ENCODE measurements at regions of chr18 and their contacts with region 1.

Region 1: GRCh38 chr18:12236934-12237832 is 17.0 kb upstream of the CIDEA start:
- DNase-seq: peak; percentile 24
- ATAC-seq: peak; percentile 99
- H3K4me3 ChIP-seq: peak overlapping the region in 1 of 3 experiments; percentile 41; a peak in 1 of 6 replicates
- H3K27ac ChIP-seq: no peak overlapping the region
- H3K4me1 ChIP-seq: peaks cover 12% of the 10 kb centered on the region; the same call in 1 of the 2 replicates
- H3K27me3 ChIP-seq: peaks cover 3 to 36% of the 10 kb centered on the region in 2 experiments
- CTCF ChIP-seq: peak; percentile 96
- EP300 ChIP-seq: no peak
- POLR2A ChIP-seq: no peak
- RAD21 ChIP-seq: peak; percentile 89

Region 2: GRCh38 chr18:10604182-10604581 is 1633.0 kb before region 1 on chr18:
- CTCF ChIA-PET with region 1: no interaction called
- POLR2A ChIA-PET with region 1: no interaction called
- in situ Hi-C with region 1: loop called (anchors 10 kb)
- intact Hi-C with region 1: no loop called
- DNase-seq: no peak
- ATAC-seq: no peak
- H3K4me3 ChIP-seq: no peak overlapping the region
- H3K27ac ChIP-seq: no peak overlapping the region
- H3K4me1 ChIP-seq: no peaks in the 10 kb centered on the region
- H3K27me3 ChIP-seq: no peaks in the 10 kb centered on the region
- CTCF ChIP-seq: no peak
- EP300 ChIP-seq: no peak
- POLR2A ChIP-seq: no peak
- RAD21 ChIP-seq: no peak

Region 3: DNA sequence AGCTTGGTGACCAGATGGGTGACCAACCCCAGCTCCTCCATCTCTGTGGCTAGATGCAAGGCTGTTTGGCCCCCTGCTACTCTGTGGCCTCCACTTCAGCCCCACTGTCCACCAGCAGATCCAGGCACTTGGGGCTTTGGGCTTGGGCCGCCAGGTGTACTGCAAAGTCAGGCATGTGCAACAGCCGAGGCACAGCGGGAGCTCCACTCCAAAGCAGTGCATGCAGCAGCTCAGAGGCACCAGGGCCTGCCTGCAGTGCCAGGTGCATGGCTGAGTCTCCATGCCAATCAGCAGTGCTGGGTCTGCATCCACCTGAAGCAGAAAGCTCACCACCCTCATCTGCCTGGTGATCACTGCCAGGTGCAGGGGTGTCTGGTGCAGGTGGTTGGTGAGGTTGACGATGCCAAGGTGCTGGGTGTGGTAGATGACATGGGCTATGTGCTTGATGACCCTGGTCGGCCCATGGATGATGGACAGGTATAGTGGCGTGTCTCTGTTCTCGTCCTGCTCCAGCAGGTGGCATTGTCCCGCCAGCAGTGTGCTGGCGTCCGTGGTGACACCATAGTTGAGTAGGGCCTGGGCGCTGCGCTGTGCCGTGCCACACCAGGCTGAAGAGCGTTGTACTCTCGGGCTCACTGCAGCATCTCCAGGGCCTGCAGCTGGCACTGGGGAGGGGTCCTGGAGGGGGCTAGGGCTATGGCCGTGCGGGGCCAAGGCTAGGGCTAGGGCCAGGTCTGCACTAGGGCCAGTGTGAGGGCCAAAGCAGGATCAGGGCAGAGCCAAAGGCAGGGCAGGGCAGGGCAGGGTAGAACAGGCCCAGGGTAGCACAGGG is 144.6 kb before region 1 on chr18:
- CTCF ChIA-PET with region 1: interaction called, 36 read pairs
- POLR2A ChIA-PET with region 1: no interaction called
- in situ Hi-C with region 1: loop called (anchors 5 kb)
- intact Hi-C with region 1: no loop called
- DNase-seq: peak; percentile 60
- ATAC-seq: peak; percentile 99
- H3K4me3 ChIP-seq: peak overlapping the region in 1 of 3 experiments; percentile 35; a peak in 1 of 6 replicates
- H3K27ac ChIP-seq: no peak overlapping the region
- H3K4me1 ChIP-seq: no peaks in the 10 kb centered on the region
- H3K27me3 ChIP-seq: peaks cover 0 to 7% of the 10 kb centered on the region in 2 experiments; a peak in 1 of 5 replicates
- CTCF ChIP-seq: peak; percentile 97
- EP300 ChIP-seq: no peak
- POLR2A ChIP-seq: no peak
- RAD21 ChIP-seq: peak; percentile 90

Region 4: DNA sequence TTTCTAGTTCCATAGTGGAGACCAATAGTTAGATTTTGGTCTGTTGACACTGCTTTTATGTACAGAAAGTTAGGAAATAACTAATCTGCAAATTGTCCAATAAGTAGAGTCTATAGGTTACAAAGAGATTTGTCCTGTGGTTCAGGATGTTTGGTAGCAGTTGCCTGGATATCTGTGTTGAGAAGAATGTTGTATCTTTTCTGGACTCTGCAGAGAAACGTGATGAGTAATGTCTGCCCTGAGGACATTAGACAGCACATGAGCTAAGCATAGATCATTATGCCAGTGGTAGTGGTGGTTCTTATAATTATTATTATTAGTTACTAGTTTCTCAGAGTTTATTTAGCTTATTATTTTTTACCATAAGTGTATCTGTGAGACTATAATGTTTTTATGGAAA is 77.7 kb before region 1 on chr18:
- CTCF ChIA-PET with region 1: no interaction called
- POLR2A ChIA-PET with region 1: no interaction called
- in situ Hi-C with region 1: loop called (anchors 10 kb)
- intact Hi-C with region 1: no loop called
- DNase-seq: peak; percentile 18
- ATAC-seq: peak; percentile 70
- H3K4me3 ChIP-seq: no peak overlapping the region
- H3K27ac ChIP-seq: no peak overlapping the region
- H3K4me1 ChIP-seq: peaks cover 5% of the 10 kb centered on the region; the same call in 1 of the 2 replicates
- H3K27me3 ChIP-seq: no peaks in the 10 kb centered on the region; a peak in 1 of 5 replicates
- CTCF ChIP-seq: no peak
- EP300 ChIP-seq: no peak
- POLR2A ChIP-seq: no peak
- RAD21 ChIP-seq: no peak

Region 5: DNA sequence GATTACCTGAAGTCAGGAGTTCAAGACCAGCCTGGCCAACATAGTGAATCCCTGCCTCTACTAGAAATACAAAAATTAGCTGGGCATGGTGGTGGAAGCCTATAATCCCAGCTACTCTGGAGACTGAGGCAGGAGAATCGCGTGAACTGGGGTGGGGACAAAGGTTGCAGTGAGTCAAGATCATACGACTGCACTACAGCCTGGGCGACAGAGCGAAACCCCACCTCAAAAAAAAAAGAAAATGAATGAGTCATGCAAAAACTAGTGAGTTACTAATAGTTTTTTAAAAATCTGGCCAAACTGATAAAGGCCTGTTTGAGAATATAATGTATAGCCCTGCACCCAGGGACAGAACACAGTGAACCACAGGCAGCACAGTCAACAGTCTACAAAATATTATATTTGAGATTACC is 122.3 kb after region 1 on chr18:
- CTCF ChIA-PET with region 1: no interaction called
- POLR2A ChIA-PET with region 1: no interaction called
- in situ Hi-C with region 1: no loop called
- intact Hi-C with region 1: no loop called
- DNase-seq: no peak
- ATAC-seq: no peak
- H3K4me3 ChIP-seq: no peak overlapping the region
- H3K27ac ChIP-seq: no peak overlapping the region
- H3K4me1 ChIP-seq: no peaks in the 10 kb centered on the region
- H3K27me3 ChIP-seq: no peaks in the 10 kb centered on the region
- CTCF ChIP-seq: no peak
- EP300 ChIP-seq: no peak
- POLR2A ChIP-seq: no peak
- RAD21 ChIP-seq: no peak

Measured in HepG2 (cell line).